ENCODE measurements at regions of chr9 and their contacts with region 1.

Region 1: DNA sequence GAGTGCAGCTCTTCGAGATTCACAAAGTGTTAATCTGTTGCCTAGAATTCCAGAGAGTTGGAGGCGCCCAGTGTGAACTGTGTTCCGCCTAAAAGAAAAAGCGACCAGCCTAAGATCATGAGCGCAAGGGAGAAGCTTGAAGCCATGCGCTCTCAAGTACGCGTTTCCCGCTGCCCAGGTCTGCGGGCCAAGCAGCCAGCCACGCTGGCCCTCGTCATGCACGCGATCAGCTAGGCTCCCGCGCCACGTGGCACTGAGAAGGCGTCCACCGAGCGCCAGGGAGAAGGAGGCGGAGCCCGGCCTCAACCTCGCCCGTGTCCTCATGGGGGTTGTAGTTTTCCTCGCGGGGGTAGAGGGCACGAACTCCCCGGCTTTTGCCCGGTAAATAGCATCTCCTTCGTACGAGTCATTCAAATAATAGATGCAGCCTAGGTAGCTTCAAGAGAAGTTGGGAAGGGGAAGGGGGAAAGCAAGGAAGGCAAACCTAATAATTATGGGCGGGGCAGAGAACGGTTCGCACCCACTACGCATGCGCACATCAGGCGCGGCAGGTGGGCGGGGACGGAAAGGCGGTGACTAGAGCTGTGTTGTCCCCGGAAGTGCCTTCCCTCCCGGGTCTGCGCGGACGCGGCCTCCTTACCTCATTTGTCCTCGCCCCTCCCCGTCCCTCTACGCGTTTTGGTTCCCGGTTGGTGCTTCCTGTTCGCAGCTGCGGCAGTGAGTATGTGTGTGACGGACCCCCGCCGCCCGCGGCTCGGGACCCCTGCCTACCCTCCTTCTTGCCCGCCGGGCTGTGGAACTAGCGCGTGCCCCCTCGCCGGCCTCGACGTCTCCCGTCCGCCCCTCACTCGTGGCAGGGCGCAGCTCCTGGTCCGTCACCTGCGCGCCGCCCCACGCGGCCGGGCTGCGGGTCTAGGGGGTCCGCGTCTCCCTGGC is at the start of gene ZCCHC7:
- DNase-seq: peak; percentile 98
- ATAC-seq: peak; percentile 92
- H3K4me3 ChIP-seq: peak within 1 kb of the TSS; percentile 80 to 97 (median 94)
- H3K4me3 Mint-ChIP-seq: peak within 1 kb of the TSS; percentile 100
- H3K27ac ChIP-seq: peak within 1 kb of the TSS; percentile 93 to 98
- H3K27ac Mint-ChIP-seq: peak within 1 kb of the TSS; percentile 100
- H3K4me1 ChIP-seq: peaks cover 36 to 44% of the 10 kb centered on the region in 2 donors
- H3K4me1 Mint-ChIP-seq: peaks cover 44% of the 10 kb centered on the region
- H3K27me3 ChIP-seq: no peaks in the 10 kb centered on the region
- H3K27me3 Mint-ChIP-seq: no peaks in the 10 kb centered on the region
- CTCF ChIP-seq: no peak
- total RNA-seq, gene ZCCHC7: 81.9 and 83.5 TPM in 2 replicates

Region 2: GRCh38 chr9:36895744-36896260 is 224.4 kb before region 1 on chr9:
- CTCF ChIA-PET with region 1: no interaction called
- POLR2A ChIA-PET with region 1: no interaction called
- intact Hi-C with region 1: no loop called
- DNase-seq: no peak
- ATAC-seq: no peak
- H3K4me3 ChIP-seq: no peak overlapping the region
- H3K4me3 Mint-ChIP-seq: no peak overlapping the region
- H3K27ac ChIP-seq: peak overlapping the region in 1 of 2 donors; percentile 34
- H3K27ac Mint-ChIP-seq: peak overlapping the region; percentile 72
- H3K4me1 ChIP-seq: peaks cover 0 to 2% of the 10 kb centered on the region in 2 donors
- H3K4me1 Mint-ChIP-seq: peaks cover 12% of the 10 kb centered on the region
- H3K27me3 ChIP-seq: no peaks in the 10 kb centered on the region
- H3K27me3 Mint-ChIP-seq: no peaks in the 10 kb centered on the region
- CTCF ChIP-seq: no peak

Region 3: GRCh38 chr9:37187713-37188439 is 67.7 kb after region 1 on chr9:
- CTCF ChIA-PET with region 1: interaction called, 13 read pairs
- POLR2A ChIA-PET with region 1: no interaction called
- intact Hi-C with region 1: no loop called
- DNase-seq: no peak
- ATAC-seq: peak; percentile 78
- H3K4me3 ChIP-seq: peak overlapping the region; percentile 29 to 56 (median 41)
- H3K4me3 Mint-ChIP-seq: peak overlapping the region; percentile 82
- H3K27ac ChIP-seq: peak overlapping the region; percentile 89 to 92
- H3K27ac Mint-ChIP-seq: peak overlapping the region; percentile 70
- H3K4me1 ChIP-seq: peaks cover 46 to 76% of the 10 kb centered on the region in 2 donors
- H3K4me1 Mint-ChIP-seq: peaks cover 75% of the 10 kb centered on the region
- H3K27me3 ChIP-seq: no peaks in the 10 kb centered on the region
- H3K27me3 Mint-ChIP-seq: no peaks in the 10 kb centered on the region
- CTCF ChIP-seq: no peak

Region 4: GRCh38 chr9:37293664-37294524 is 173.7 kb after region 1 on chr9:
- CTCF ChIA-PET with region 1: no interaction called
- POLR2A ChIA-PET with region 1: no interaction called
- intact Hi-C with region 1: loop called (anchors 5 kb)
- DNase-seq: peak; percentile 81
- ATAC-seq: peak; percentile 70
- H3K4me3 ChIP-seq: peak overlapping the region in 3 of 5 experiments; percentile 4 to 8 (median 7)
- H3K4me3 Mint-ChIP-seq: peak overlapping the region; percentile 74
- H3K27ac ChIP-seq: peak overlapping the region; percentile 79 to 88
- H3K27ac Mint-ChIP-seq: peak overlapping the region; percentile 95
- H3K4me1 ChIP-seq: peaks cover 79 to 97% of the 10 kb centered on the region in 2 donors
- H3K4me1 Mint-ChIP-seq: peaks cover 82% of the 10 kb centered on the region
- H3K27me3 ChIP-seq: no peaks in the 10 kb centered on the region
- H3K27me3 Mint-ChIP-seq: no peaks in the 10 kb centered on the region
- CTCF ChIP-seq: no peak

Region 5: DNA sequence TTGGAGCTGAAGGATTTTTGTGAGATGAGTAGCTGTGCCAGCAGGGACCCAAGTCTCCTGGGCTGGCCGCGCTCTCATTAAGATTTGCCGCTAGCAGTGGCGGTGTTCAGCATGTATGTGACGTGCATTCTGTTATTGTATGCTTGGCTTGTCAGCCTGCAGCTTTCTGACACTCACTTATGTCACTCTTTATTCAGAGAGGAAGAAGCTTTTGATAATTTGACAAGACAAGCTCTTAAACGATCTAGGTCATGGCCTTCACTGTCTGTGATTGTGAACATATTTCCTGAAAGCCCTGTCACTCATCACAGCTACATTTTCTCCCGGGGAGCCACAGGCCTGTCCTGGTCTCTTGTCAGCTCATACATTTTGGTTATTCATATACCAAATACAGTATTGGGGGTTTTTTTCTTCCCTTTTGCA is 204.1 kb after region 1 on chr9:
- CTCF ChIA-PET with region 1: interaction called, 12 read pairs
- POLR2A ChIA-PET with region 1: interaction called, 14 read pairs
- intact Hi-C with region 1: loop called (anchors 2 kb)
- DNase-seq: peak; percentile 90
- ATAC-seq: peak; percentile 84
- H3K4me3 ChIP-seq: peak overlapping the region in 2 of 5 experiments; percentile 7 to 31
- H3K4me3 Mint-ChIP-seq: peak overlapping the region; percentile 76
- H3K27ac ChIP-seq: peak overlapping the region; percentile 97 to 98
- H3K27ac Mint-ChIP-seq: peak overlapping the region; percentile 100
- H3K4me1 ChIP-seq: peaks cover 43 to 78% of the 10 kb centered on the region in 2 donors
- H3K4me1 Mint-ChIP-seq: peaks cover 62% of the 10 kb centered on the region
- H3K27me3 ChIP-seq: no peaks in the 10 kb centered on the region
- H3K27me3 Mint-ChIP-seq: no peaks in the 10 kb centered on the region
- CTCF ChIP-seq: no peak

Region 6: DNA sequence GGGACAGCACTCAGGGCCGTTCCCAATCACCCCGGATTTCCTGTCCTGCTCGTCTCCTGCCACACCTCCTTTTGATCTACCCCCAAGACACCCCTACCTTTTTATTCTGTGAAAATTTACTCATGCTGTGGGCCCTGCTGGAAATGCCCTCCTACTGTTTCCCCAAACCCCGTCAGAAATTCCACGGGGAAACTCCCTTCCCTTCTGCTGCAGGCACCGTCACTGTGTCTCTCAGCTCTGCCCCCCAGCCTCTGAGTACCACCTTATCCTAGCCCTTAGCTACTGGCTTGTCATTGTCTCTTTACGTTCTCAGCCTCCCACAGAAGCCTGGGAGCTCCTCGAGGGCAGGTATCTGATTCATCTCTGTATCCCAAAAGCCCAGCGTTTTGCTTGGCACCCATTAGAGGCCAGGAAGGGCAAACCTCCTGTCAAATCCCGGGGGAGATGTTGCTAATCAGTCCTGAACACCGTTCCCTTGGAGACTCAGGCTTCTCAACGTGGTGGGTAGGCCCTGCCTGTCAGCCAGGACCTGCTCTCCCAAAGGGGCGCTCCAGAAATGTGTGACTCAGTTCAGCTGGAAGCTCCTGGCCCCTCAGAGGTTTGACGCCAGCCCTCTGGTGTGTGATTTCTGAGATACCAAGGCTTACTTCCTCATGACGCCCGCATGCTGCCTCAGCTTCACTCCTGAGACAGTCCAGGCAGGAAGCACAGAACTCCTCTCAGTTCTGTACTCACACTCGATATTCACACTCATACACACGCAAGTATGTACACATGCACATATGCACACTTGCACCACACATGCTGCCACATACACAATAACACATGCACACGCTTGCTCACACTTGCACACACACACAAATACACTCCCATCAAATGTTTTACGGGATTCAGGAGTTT is 251.6 kb after region 1 on chr9:
- CTCF ChIA-PET with region 1: no interaction called
- POLR2A ChIA-PET with region 1: no interaction called
- intact Hi-C with region 1: loop called (anchors 1 kb)
- DNase-seq: peak; percentile 74
- ATAC-seq: peak; percentile 4
- H3K4me3 ChIP-seq: peak overlapping the region in 2 of 5 experiments; percentile 25 to 38
- H3K4me3 Mint-ChIP-seq: peak overlapping the region; percentile 70
- H3K27ac ChIP-seq: peak overlapping the region; percentile 78 to 94
- H3K27ac Mint-ChIP-seq: peak overlapping the region; percentile 88
- H3K4me1 ChIP-seq: peaks cover 95 to 100% of the 10 kb centered on the region in 2 donors
- H3K4me1 Mint-ChIP-seq: peaks cover 88% of the 10 kb centered on the region
- H3K27me3 ChIP-seq: no peaks in the 10 kb centered on the region
- H3K27me3 Mint-ChIP-seq: no peaks in the 10 kb centered on the region
- CTCF ChIP-seq: no peak